ENCODE measurements at regions of chr1 and their contacts with region 1.

Region 1: DNA sequence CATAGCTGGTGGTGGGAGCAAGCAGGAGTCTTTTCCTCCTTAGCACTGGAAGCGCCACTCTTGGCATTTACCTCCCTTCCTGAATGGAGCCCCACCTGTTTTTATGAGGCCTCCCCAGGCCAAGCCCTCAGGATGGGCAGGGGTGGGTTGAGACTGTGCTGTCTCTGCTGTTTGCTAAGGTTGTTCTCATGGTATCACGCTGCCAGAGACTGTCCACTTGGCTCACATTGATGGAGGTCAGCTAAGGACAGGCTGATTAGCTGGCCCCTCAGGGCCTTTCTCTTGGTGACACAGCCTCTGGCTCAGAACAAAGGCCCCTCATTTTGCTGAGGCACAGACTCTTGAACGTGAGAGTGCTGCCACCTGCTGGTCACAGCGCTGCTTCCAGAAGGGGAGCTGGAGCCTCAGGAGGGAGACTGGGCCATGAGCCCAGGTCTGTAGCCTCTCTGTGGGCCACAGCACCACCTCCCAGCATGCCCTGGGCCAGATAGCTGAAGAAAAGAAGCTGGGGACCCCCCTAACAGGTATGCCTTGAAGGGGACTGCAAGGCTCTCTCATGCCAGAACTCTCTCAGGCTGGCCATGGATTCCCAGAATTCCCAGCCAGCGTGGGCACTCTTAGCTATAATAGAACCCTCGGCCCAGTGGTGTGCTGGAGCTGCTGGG is 85.6 kb downstream of the CD58 start:
- DNase-seq: peak; percentile 82
- H3K4me3 Mint-ChIP-seq: no peak overlapping the region
- H3K27ac Mint-ChIP-seq: no peak overlapping the region
- H3K4me1 Mint-ChIP-seq: peaks cover 28% of the 10 kb centered on the region
- H3K27me3 Mint-ChIP-seq: no peaks in the 10 kb centered on the region
- CTCF ChIP-seq: peak; percentile 90

Region 2: GRCh38 chr1:115807723-115808122 is 677.5 kb before region 1 on chr1:
- CTCF ChIA-PET with region 1: interaction called, 5 read pairs
- POLR2A ChIA-PET with region 1: no interaction called
- intact Hi-C with region 1: loop called (anchors 10 kb)
- DNase-seq: peak; percentile 82
- H3K4me3 Mint-ChIP-seq: no peak overlapping the region
- H3K27ac Mint-ChIP-seq: no peak overlapping the region
- H3K4me1 Mint-ChIP-seq: peaks cover 13% of the 10 kb centered on the region
- H3K27me3 Mint-ChIP-seq: no peaks in the 10 kb centered on the region
- CTCF ChIP-seq: peak; percentile 62

Region 3: DNA sequence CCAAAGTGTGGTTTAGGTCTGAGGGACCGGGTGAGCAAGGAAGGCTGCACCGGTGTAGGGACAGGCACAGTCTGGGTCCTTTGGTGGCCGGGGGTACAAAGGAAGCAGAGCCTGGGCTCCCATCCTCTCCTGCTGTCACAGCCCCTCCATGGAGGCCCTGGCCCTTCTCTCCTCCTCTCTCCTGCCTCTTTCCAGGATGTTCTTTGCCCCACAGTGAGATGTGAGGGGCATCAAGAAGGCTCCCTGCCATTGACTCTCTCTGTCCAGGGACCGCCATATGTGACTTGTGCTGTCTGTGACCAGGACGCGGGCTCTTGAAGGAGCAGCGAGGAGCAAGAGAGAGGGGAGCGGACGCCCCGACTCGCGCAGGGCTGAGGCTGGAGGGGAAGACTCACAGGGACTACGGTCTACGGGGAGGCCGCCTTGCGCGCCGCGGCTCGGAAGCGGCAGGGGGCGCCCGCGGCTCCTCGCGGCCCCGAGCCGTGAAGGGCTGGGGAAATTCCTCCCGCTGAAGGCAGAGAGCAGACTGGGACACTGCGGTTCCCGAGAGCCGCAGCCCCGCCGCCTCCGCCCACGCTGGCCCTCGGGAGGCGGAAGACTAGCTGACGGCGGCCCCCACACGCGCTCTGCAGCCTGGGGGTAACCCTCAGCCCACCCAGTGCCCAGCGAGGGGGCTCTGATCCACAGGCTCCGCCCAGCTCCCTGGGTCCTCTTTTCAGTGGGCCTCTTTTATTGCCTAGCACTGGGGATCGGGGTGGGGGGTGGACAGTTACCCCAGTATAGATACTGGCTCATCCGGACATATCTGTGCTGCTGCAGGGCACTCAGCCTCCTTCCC is 333.2 kb before region 1 on chr1:
- CTCF ChIA-PET with region 1: interaction called, 191 read pairs
- POLR2A ChIA-PET with region 1: interaction called, 6 read pairs
- intact Hi-C with region 1: loop called (anchors 1 kb)
- DNase-seq: peak; percentile 72
- H3K4me3 Mint-ChIP-seq: peak overlapping the region; percentile 20
- H3K27ac Mint-ChIP-seq: no peak overlapping the region
- H3K4me1 Mint-ChIP-seq: peaks cover 4% of the 10 kb centered on the region
- H3K27me3 Mint-ChIP-seq: peaks cover 12% of the 10 kb centered on the region
- CTCF ChIP-seq: peak; percentile 90

Region 4: DNA sequence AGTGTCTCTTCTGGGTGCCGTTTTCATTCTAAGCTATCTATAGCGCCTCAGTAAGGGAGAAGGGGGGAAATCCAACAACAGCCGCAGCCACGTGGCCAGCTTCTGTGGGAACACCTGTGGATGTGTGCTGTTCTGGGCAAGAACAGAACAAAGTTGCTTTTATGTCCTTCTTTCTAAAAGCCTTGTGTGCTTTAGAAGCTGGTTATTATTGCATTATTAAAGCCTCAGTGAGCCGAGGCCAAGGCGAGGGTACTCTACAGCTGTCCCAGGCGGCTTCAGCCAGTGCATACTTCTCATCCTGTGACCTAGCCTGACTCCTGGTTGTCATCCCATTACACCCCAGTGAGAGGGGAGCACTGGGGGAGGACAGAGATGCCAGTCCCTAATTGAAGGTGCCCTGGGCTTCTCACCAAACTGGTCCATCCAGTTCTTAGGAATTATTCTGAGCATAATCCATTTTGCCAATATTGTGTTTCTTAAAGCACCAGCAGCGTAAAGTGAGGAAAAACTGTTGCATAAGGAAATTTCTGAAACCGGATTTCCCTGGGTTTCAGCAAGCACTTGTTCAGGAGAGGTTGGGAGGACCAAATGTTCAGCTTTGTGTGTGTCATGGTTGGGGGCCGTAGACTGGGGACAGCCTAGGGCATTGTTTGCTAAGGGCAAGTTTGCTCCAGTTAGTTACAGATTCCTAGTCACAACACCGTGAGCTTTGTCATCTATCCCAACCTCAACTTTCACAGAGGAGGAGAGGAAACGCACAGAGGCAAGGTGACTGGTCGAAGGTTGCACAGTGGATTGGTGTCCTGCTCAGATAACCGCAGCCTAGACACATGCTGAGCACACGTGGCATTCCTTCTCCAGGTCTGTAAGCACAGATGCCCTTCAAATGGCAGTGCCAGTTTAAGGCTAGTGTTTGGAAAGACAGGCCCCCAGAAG is 173.2 kb before region 1 on chr1:
- CTCF ChIA-PET with region 1: interaction called, 13 read pairs
- POLR2A ChIA-PET with region 1: no interaction called
- intact Hi-C with region 1: no loop called
- DNase-seq: no peak
- H3K4me3 Mint-ChIP-seq: no peak overlapping the region
- H3K27ac Mint-ChIP-seq: no peak overlapping the region
- H3K4me1 Mint-ChIP-seq: peaks cover 11% of the 10 kb centered on the region
- H3K27me3 Mint-ChIP-seq: no peaks in the 10 kb centered on the region
- CTCF ChIP-seq: no peak

Region 5: GRCh38 chr1:116390195-116390594 is 95.0 kb before region 1 on chr1:
- CTCF ChIA-PET with region 1: interaction called, 12 read pairs
- POLR2A ChIA-PET with region 1: interaction called, 5 read pairs
- intact Hi-C with region 1: no loop called
- DNase-seq: no peak
- H3K4me3 Mint-ChIP-seq: no peak overlapping the region
- H3K27ac Mint-ChIP-seq: no peak overlapping the region
- H3K4me1 Mint-ChIP-seq: peaks cover 43% of the 10 kb centered on the region
- H3K27me3 Mint-ChIP-seq: no peaks in the 10 kb centered on the region
- CTCF ChIP-seq: no peak

Region 6: DNA sequence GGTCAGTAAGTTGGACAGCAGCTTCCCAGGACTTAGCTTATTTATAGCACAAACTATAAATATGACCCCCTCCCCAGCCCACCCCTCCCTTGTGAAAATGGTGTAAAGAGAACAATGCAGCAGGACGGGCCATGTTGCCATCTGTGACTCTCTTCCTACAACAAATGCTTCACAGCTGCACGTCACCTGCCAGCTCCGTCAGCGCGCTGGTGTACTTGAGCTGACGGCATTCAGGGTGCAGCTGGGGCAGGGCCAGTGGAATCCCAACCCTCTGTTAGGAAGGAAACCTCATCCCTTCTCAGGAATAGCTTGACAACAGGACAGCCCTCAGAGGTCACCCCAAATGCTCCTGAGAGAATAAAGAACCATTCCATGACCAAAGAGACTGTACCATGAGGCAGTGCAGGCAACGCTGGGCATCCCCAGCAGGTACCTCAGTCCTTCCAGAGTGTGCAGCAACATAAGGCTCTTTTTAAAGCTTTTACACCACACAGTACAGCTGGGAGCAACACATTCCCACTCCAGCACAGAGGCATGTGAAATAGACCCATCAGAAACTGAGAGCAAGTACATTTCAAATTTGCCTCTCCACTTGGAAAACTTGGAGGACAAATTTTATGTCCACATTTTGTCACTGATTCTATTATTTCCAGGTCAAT is 27.1 kb before region 1 on chr1:
- CTCF ChIA-PET with region 1: interaction called, 17 read pairs
- POLR2A ChIA-PET with region 1: no interaction called
- intact Hi-C with region 1: no loop called
- DNase-seq: no peak
- H3K4me3 Mint-ChIP-seq: no peak overlapping the region
- H3K27ac Mint-ChIP-seq: no peak overlapping the region
- H3K4me1 Mint-ChIP-seq: no peaks in the 10 kb centered on the region
- H3K27me3 Mint-ChIP-seq: peaks cover 26% of the 10 kb centered on the region
- CTCF ChIP-seq: no peak

Region 7: DNA sequence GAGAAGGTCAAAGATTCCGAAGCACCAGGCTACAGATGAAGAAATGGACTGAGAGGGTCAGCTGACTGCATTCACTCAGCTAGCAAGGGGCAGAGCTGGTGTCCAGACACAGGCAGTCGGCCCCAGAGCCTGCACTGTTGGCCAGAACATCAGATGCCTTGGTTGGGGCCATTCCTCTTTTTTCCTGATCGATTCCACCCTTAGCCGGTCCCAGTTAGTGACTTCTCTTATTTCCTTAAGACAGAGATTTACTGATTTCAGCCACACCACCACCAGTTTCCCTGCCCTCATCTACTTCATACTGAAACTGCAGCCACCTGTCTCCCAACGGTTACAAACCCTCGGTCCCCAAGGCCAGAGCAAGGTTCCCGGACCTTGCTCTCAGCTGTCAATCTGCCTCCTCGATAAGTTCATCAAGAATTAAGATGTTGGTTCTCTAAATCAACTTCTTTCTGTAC is 74.1 kb after region 1 on chr1:
- CTCF ChIA-PET with region 1: no interaction called
- POLR2A ChIA-PET with region 1: no interaction called
- intact Hi-C with region 1: no loop called
- DNase-seq: no peak
- H3K4me3 Mint-ChIP-seq: no peak overlapping the region
- H3K27ac Mint-ChIP-seq: no peak overlapping the region
- H3K4me1 Mint-ChIP-seq: peaks cover 14% of the 10 kb centered on the region
- H3K27me3 Mint-ChIP-seq: no peaks in the 10 kb centered on the region
- CTCF ChIP-seq: no peak

Region 8: GRCh38 chr1:116586741-116587143 is 101.5 kb after region 1 on chr1:
- CTCF ChIA-PET with region 1: no interaction called
- POLR2A ChIA-PET with region 1: no interaction called
- intact Hi-C with region 1: no loop called
- DNase-seq: no peak
- H3K4me3 Mint-ChIP-seq: no peak overlapping the region
- H3K27ac Mint-ChIP-seq: no peak overlapping the region
- H3K4me1 Mint-ChIP-seq: peaks cover 9% of the 10 kb centered on the region
- H3K27me3 Mint-ChIP-seq: no peaks in the 10 kb centered on the region
- CTCF ChIP-seq: no peak

Region 9: DNA sequence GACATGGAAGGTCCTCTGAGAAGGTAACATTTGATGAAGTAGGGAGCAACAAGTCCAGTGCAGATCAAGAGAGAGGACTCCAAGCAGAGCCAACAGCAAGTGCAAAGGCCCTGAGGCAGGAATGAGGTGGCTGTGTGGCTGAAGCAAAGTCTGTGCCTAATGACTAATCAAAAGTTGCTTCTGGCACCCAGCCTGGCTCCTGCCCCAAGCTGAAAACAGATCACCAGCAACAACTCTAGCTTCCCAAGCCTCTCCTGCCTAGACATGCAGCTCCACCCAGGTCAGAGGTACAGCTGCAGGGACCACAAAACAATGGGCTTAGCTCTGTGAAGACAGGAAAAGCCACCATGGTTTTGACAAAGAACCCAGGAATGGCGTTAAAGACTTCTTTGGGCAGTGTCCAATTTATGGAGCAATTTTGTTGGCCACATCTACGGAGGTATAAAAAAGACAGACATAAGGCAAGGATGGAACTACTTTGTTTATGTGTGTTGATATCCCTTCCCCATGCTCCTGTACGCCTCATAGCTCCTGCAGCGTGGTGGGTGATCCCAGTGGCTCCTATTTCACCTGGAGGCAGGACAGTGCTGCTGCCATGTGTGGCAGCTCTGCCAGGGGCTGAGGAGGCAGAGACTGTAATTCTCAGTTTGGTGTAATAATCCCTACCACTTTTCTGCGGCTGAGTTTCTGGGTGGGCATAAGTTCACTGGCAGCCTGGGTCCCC is 208.7 kb after region 1 on chr1:
- CTCF ChIA-PET with region 1: no interaction called
- POLR2A ChIA-PET with region 1: no interaction called
- intact Hi-C with region 1: no loop called
- DNase-seq: peak; percentile 98
- H3K4me3 Mint-ChIP-seq: no peak overlapping the region
- H3K27ac Mint-ChIP-seq: peak overlapping the region; percentile 72
- H3K4me1 Mint-ChIP-seq: peaks cover 43% of the 10 kb centered on the region
- H3K27me3 Mint-ChIP-seq: no peaks in the 10 kb centered on the region
- CTCF ChIP-seq: no peak

Measured in MCF 10A (cell line).